Activated CD4-positive, alpha-beta T cell treated with anti-CD3 and anti-CD28 coated beads for 36 hours (primary cell): ENCODE measurements at regions of chr5 and their contacts with region 1.

Region 1: DNA sequence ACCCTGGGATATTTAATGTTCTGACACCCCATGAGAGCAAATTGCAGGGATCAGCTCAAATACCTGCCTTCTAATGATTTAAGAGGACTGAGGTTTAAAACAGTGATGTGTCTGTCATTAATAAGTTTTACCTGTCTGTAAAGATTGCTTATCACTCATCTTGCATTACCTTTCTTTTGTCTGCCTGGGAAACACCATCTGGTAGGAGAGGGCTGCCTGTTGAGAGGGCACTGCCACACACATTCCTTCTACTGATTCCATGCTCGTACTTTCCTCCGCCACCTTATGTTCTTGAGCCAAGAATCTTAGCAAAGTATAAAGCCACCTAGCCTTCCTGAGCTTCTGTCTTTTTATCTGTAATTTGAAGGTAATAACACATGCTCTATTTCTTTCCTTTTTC is 118.6 kb downstream of the KCTD16 start:
- DNase-seq: no peak
- ATAC-seq: no peak
- H3K4me3 Mint-ChIP-seq: no peak overlapping the region
- H3K27ac Mint-ChIP-seq: no peak overlapping the region
- H3K4me1 Mint-ChIP-seq: no peaks in the 10 kb centered on the region
- H3K27me3 Mint-ChIP-seq: peaks cover 7% of the 10 kb centered on the region

Region 2: GRCh38 chr5:144273232-144274027 is 15.8 kb before region 1 on chr5:
- CTCF ChIA-PET with region 1: no interaction called
- POLR2A ChIA-PET with region 1: no interaction called
- intact Hi-C with region 1: loop called in 1 of 2 experiments (anchors 1 kb)
- DNase-seq: no peak
- ATAC-seq: no peak
- H3K4me3 Mint-ChIP-seq: no peak overlapping the region
- H3K27ac Mint-ChIP-seq: no peak overlapping the region
- H3K4me1 Mint-ChIP-seq: no peaks in the 10 kb centered on the region
- H3K27me3 Mint-ChIP-seq: peaks cover 6% of the 10 kb centered on the region

Region 3: GRCh38 chr5:144421428-144421827 is 132.2 kb after region 1 on chr5:
- CTCF ChIA-PET with region 1: no interaction called
- POLR2A ChIA-PET with region 1: no interaction called
- intact Hi-C with region 1: no loop called
- DNase-seq: no peak
- ATAC-seq: no peak
- H3K4me3 Mint-ChIP-seq: no peak overlapping the region
- H3K27ac Mint-ChIP-seq: no peak overlapping the region
- H3K4me1 Mint-ChIP-seq: no peaks in the 10 kb centered on the region
- H3K27me3 Mint-ChIP-seq: no peaks in the 10 kb centered on the region